Activated CD4-positive, alpha-beta T cell treated with anti-CD3 and anti-CD28 coated beads, Interleukin-2, amount 10 ng/mL, durations not matched to agents 7 days and 5 days (primary cell): ENCODE measurements at regions of chr18 and their contacts with region 1.

Region 1: GRCh38 chr18:9097349-9097748 is 5.2 kb upstream of the NDUFV2 start:
- DNase-seq: no peak
- H3K4me3 Mint-ChIP-seq: no peak overlapping the region
- H3K27ac Mint-ChIP-seq: no peak overlapping the region
- H3K4me1 Mint-ChIP-seq: peaks cover 62% of the 10 kb centered on the region
- H3K27me3 Mint-ChIP-seq: no peaks in the 10 kb centered on the region

Region 2: GRCh38 chr18:9109523-9109922 is 12.2 kb after region 1 on chr18:
- CTCF ChIA-PET with region 1: interaction called, 13 read pairs
- POLR2A ChIA-PET with region 1: no interaction called
- DNase-seq: no peak
- H3K4me3 Mint-ChIP-seq: peak overlapping the region; percentile 4
- H3K27ac Mint-ChIP-seq: no peak overlapping the region
- H3K4me1 Mint-ChIP-seq: peaks cover 81% of the 10 kb centered on the region
- H3K27me3 Mint-ChIP-seq: no peaks in the 10 kb centered on the region

Region 3: GRCh38 chr18:9173770-9174233 is 76.5 kb after region 1 on chr18:
- CTCF ChIA-PET with region 1: no interaction called
- POLR2A ChIA-PET with region 1: no interaction called
- DNase-seq: no peak
- H3K4me3 Mint-ChIP-seq: no peak overlapping the region
- H3K27ac Mint-ChIP-seq: no peak overlapping the region
- H3K4me1 Mint-ChIP-seq: peaks cover 31% of the 10 kb centered on the region
- H3K27me3 Mint-ChIP-seq: no peaks in the 10 kb centered on the region